Lower lobe of right lung (tissue), 2 donors: ENCODE measurements at regions of chr2 and their contacts with region 1.

Region 1: GRCh38 chr2:88831792-88832248 is 140.3 kb downstream of the RPIA start:
- DNase-seq: peak; percentile 79
- ATAC-seq: peak; percentile 86 to 88
- H3K4me3 ChIP-seq: no peak overlapping the region
- H3K27ac ChIP-seq: no peak overlapping the region
- H3K4me1 ChIP-seq: no peaks in the 10 kb centered on the region
- H3K27me3 ChIP-seq: no peaks in the 10 kb centered on the region
- CTCF ChIP-seq: peak; percentile 80

Region 2: GRCh38 chr2:88875736-88876135 is 43.9 kb after region 1 on chr2:
- intact Hi-C with region 1: loop called (anchors 5 kb)
- DNase-seq: no peak
- ATAC-seq: no peak
- H3K4me3 ChIP-seq: no peak overlapping the region
- H3K27ac ChIP-seq: no peak overlapping the region
- H3K4me1 ChIP-seq: no peaks in the 10 kb centered on the region
- H3K27me3 ChIP-seq: no peaks in the 10 kb centered on the region
- CTCF ChIP-seq: no peak